ENCODE measurements at regions of chr2 and their contacts with region 1.

Region 1: GRCh38 chr2:174023591-174024523 is 58.7 kb upstream of the SP3 start:
- DNase-seq: peak; percentile 59 to 82
- H3K4me3 ChIP-seq: no peak overlapping the region
- H3K27ac ChIP-seq: peak overlapping the region; percentile 82 to 86
- H3K4me1 ChIP-seq: peaks cover 4 to 6% of the 10 kb centered on the region in 2 donors
- H3K27me3 ChIP-seq: no peaks in the 10 kb centered on the region
- CTCF ChIP-seq: peak in 1 of 4 experiments; percentile 2
- POLR2A ChIP-seq: peak in 1 of 2 donors; percentile 30

Region 2: GRCh38 chr2:173965329-173966025 is 58.4 kb before region 1 on chr2 and contains the start of gene SP3:
- intact Hi-C with region 1: loop called (anchors 10 kb)
- DNase-seq: peak; percentile 98
- H3K4me3 ChIP-seq: peak within 1 kb of the TSS; percentile 88 to 100
- H3K27ac ChIP-seq: peak within 1 kb of the TSS; percentile 100
- H3K4me1 ChIP-seq: peaks cover 0 to 7% of the 10 kb centered on the region in 2 donors
- H3K27me3 ChIP-seq: no peaks in the 10 kb centered on the region
- CTCF ChIP-seq: no peak
- POLR2A ChIP-seq: peak; percentile 93 to 98
- total RNA-seq, gene SP3: 100 to 359 (median 220) TPM

Region 3: GRCh38 chr2:174428214-174428613 is 404.4 kb after region 1 on chr2:
- intact Hi-C with region 1: no loop called
- DNase-seq: no peak
- H3K4me3 ChIP-seq: no peak overlapping the region
- H3K27ac ChIP-seq: no peak overlapping the region
- H3K4me1 ChIP-seq: no peaks in the 10 kb centered on the region
- H3K27me3 ChIP-seq: no peaks in the 10 kb centered on the region
- CTCF ChIP-seq: no peak
- POLR2A ChIP-seq: no peak